Head of caudate nucleus (tissue), 42 donors: ENCODE measurements at regions of chr1 and their contacts with region 1.

Region 1: GRCh38 chr1:25253911-25254310 is 6.7 kb upstream of the RSRP1 start:
- DNase-seq: no peak

Region 2: GRCh38 chr1:25140073-25140797 is 113.7 kb before region 1 on chr1:
- intact Hi-C with region 1: no loop called
- DNase-seq: peak in 10 of 42 donors; percentile 11 to 50 (median 24)

Region 3: DNA sequence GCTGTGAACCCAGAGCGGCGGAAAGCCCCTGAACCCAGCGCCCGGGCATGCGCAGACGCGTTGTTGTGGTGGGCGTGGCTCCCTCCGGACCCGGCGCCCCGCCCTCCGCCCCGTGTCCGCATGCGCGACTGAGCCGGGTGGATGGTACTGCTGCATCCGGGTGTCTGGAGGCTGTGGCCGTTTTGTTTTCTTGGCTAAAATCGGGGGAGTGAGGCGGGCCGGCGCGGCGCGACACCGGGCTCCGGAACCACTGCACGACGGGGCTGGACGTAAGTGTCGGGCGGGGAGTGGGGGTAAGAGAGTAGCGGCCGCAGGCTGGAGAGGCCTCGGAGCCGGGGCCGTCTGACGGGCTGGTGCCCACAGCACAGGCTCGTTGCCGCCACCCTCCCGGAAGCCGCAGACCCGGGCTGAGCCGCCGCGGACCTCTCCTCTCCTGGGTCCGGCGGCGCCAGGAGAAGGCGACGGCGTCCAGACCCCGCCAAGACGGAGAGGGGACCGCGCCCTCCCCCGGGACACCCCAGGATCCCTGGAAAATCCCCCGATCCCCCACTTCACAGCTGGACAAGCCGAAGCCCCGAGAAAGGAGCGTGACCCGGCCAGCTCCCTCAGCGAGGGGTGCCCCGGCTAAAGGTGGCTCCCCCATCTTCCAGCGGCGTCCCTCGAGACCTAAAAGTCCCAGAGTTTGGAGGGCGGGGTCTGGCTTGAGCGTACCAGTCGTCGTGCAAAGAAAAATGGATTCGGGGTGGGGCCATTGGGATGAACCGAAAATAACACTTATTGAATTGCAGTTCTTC is 84.5 kb after region 1 on chr1 and contains the start of gene TMEM50A:
- intact Hi-C with region 1: loop called (anchors 10 kb)
- DNase-seq: peak; percentile 81 to 96 (median 90)

Region 4: GRCh38 chr1:26307363-26307781 is 1053.5 kb after region 1 on chr1:
- intact Hi-C with region 1: no loop called
- DNase-seq: no peak